ENCODE measurements at regions of chr10 and their contacts with region 1.

Region 1: DNA sequence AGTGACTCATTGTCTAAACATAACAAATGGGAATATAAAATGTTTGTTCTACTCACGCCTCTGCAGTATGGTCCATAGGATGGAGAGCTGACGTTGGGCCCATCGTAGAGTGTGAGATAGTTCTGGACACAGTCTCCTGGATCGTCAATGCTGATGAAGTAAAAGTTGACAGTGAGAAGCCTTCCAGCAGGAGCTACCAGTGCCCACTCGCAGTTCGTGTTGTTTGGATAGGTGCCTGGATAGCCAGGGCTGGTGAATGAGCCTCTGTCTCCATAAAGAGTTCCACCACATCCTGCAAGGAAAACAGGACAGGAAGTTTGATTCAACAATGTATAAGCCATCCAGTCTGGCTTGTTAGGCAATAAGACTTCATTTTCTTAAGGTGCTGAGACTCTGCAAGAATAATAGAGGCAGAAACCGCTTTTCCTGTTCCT is 79.6 kb downstream of the OR13A1 start:
- DNase-seq: peak; percentile 78
- H3K4me3 ChIP-seq: no peak overlapping the region
- H3K27ac ChIP-seq: peak overlapping the region; percentile 14
- H3K4me1 ChIP-seq: peaks cover 28% of the 10 kb centered on the region
- H3K27me3 ChIP-seq: no peaks in the 10 kb centered on the region
- CTCF ChIP-seq: no peak
- POLR2A ChIP-seq: no peak

Region 2: DNA sequence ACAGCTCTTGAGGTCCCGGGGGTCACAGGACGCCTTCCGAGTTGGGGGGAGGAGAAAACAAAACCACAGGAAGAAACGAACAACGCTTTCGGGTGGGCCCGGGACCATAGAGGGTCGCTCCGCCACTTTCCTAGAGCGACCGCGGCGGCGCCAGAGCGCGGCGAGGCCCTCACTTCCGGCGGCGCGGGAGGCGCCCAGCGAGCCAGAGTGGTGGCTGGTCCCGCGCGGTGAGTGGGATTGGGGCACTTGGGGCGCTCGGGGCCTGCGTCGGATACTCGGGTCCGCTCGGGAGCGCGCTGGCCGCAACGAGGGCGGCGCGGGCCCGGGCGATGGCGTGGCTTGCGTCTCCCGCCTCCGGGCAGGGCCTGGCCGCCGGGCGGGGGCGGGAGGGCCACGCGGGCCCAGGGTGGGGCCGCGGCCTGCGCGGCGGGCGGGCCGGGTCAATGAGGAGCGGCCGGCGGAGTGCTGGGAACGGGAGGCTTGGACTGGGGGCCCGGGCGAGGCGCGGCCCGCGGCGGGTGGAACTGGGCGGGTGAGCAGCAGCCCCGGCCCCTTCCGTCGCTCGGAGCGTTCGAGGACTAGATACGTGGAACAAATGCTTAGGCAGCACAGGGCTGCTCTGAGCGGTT is 234.9 kb before region 1 on chr10 and contains the start of gene ZNF22:
- CTCF ChIA-PET with region 1: interaction called, 11 read pairs
- POLR2A ChIA-PET with region 1: no interaction called
- dilution Hi-C with region 1: no loop called
- intact Hi-C with region 1: no loop called
- DNase-seq: peak; percentile 75
- H3K4me3 ChIP-seq: peak within 1 kb of the TSS; percentile 34 to 86 (median 48)
- H3K27ac ChIP-seq: peak within 1 kb of the TSS; percentile 89
- H3K4me1 ChIP-seq: peaks cover 27% of the 10 kb centered on the region
- H3K27me3 ChIP-seq: no peaks in the 10 kb centered on the region
- CTCF ChIP-seq: peak in 1 of 2 donors; percentile 19
- POLR2A ChIP-seq: peak; percentile 80
- total RNA-seq, gene ZNF22: 45.0 and 48.7 TPM in 2 replicates

Region 3: DNA sequence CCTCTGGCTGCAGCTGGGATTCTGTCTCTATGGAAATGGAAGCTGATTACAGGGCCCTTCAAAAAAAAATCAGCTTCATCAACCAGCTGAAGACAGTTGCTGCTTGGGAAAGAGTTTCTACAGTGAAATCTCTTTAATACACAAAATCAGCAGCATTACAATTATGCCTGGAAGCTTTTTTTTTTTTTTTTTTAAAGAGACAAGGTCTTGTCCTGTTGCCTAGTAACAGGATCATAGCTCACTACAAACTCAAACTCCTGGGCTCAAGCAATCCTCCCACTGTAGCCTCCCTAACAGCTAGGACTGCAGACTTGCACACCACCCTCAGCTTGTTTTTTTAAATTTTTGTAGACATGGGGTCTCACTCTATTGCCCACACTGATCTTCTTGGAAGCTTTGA is 14.9 kb before region 1 on chr10:
- CTCF ChIA-PET with region 1: interaction called, 15 read pairs
- POLR2A ChIA-PET with region 1: no interaction called
- dilution Hi-C with region 1: no loop called
- intact Hi-C with region 1: no loop called
- DNase-seq: no peak
- H3K4me3 ChIP-seq: no peak overlapping the region
- H3K27ac ChIP-seq: no peak overlapping the region
- H3K4me1 ChIP-seq: no peaks in the 10 kb centered on the region
- H3K27me3 ChIP-seq: no peaks in the 10 kb centered on the region
- CTCF ChIP-seq: no peak
- POLR2A ChIP-seq: no peak

Region 4: GRCh38 chr10:45464958-45465567 is 229.2 kb after region 1 on chr10:
- CTCF ChIA-PET with region 1: interaction called, 32 read pairs
- POLR2A ChIA-PET with region 1: no interaction called
- dilution Hi-C with region 1: no loop called
- intact Hi-C with region 1: loop called (anchors 1 kb)
- DNase-seq: peak; percentile 67
- H3K4me3 ChIP-seq: no peak overlapping the region
- H3K27ac ChIP-seq: no peak overlapping the region
- H3K4me1 ChIP-seq: peaks cover 3% of the 10 kb centered on the region
- H3K27me3 ChIP-seq: no peaks in the 10 kb centered on the region
- CTCF ChIP-seq: peak; percentile 92 to 98
- POLR2A ChIP-seq: no peak

Region 5: GRCh38 chr10:46022978-46023702 is 787.3 kb after region 1 on chr10:
- CTCF ChIA-PET with region 1: interaction called, 8 read pairs
- POLR2A ChIA-PET with region 1: no interaction called
- dilution Hi-C with region 1: no loop called
- intact Hi-C with region 1: loop called (anchors 1 kb)
- DNase-seq: peak; percentile 95
- H3K4me3 ChIP-seq: peak overlapping the region; percentile 12 to 65 (median 52)
- H3K27ac ChIP-seq: peak overlapping the region; percentile 65
- H3K4me1 ChIP-seq: peaks cover 48% of the 10 kb centered on the region
- H3K27me3 ChIP-seq: no peaks in the 10 kb centered on the region
- CTCF ChIP-seq: peak in 1 of 2 donors; percentile 53
- POLR2A ChIP-seq: no peak

Region 6: DNA sequence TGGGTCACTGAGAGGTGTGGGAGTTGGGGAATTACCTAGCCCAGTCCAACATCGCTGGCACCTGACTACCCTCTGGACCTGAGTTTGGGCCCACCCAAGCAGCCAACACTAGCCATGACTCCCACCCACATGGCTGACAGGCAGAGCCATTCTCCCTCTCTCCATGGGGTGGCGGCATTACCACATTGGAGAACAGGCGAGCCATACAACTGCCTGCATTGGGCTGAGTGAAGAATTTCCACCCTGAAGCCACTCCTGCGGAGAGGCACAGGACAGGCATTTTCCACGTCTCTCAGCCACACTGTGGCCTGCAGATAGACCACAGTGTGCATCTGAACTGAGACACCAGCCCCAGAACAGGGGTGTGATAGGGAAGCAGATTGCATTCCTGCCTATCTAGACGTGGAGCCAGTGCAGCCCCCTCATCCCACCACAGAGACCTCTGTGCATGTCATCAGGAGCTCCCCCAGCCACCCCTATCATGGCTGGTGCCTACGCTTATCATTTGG is 992.8 kb after region 1 on chr10:
- CTCF ChIA-PET with region 1: interaction called, 13 read pairs
- POLR2A ChIA-PET with region 1: no interaction called
- dilution Hi-C with region 1: no loop called
- intact Hi-C with region 1: no loop called
- DNase-seq: peak; percentile 54
- H3K4me3 ChIP-seq: no peak overlapping the region
- H3K27ac ChIP-seq: no peak overlapping the region
- H3K4me1 ChIP-seq: no peaks in the 10 kb centered on the region
- H3K27me3 ChIP-seq: no peaks in the 10 kb centered on the region
- CTCF ChIP-seq: peak; percentile 56 to 81
- POLR2A ChIP-seq: no peak